ENCODE measurements at regions of chr1 and their contacts with region 1.

Region 1: DNA sequence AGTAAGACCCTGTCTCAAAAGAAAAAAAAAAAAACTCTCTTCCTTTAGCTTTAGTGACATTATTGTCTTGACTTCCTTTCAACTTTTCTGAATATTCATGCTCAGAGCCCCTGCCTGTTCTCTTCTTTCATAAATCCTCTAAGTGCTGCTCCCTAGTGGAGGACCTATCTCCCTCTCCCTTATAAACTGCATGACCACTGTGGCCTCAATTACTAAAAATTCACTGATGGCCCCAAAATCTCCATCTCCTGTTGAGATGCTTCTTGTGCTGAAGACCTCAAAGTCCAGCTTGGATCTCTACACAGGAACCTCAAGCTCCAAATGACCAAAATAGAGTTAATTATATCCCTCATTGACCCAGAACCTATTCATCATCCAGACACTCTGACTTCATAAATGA is 7.8 kb downstream of the ITLN1 start:
- DNase-seq: peak in 2 of 5 donors; percentile 42 to 54
- H3K4me3 ChIP-seq: no peak overlapping the region
- H3K4me3 Mint-ChIP-seq: no peak overlapping the region
- H3K27ac ChIP-seq: no peak overlapping the region
- H3K27ac Mint-ChIP-seq: peak overlapping the region in 5 of 8 donors; percentile 2 to 80 (median 27)
- H3K4me1 ChIP-seq: peaks cover 12% of the 10 kb centered on the region
- H3K4me1 Mint-ChIP-seq: peaks cover 23 to 46% (median 23%) of the 10 kb centered on the region in 3 donors
- H3K27me3 ChIP-seq: no peaks in the 10 kb centered on the region
- H3K27me3 Mint-ChIP-seq: no peaks in the 10 kb centered on the region

Region 2: DNA sequence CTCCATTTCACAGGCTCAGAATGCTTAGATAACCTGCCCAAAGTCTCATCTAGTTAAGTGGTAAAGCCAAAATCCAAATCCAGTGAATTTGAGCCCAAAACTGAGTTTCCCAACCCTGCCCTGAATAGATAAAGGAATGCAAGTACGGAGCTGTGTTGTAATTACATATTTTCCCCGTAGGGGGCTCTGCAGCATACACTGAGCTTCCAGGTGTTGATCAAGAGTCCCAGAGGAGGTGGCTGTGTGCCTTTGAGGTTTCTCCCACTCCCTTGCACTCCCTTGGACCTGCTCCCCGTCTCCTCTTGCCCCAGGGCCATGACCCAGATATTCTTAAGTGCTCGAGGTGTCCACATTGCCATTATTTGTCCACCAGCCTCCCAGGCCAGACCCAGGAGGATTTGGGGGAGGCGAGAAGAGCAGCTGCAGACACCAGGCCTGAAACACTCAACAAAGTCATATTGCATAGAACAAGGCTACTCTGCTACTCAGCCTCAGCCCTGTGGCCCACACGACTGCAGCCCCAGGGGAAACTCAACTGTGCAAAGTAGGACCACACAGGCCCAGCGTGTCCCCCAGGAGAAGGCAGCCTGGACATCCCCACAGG is 99.6 kb before region 1 on chr1:
- CTCF ChIA-PET with region 1: interaction called, 11 read pairs
- POLR2A ChIA-PET with region 1: no interaction called
- DNase-seq: peak in 4 of 5 donors; percentile 31 to 64 (median 62)
- H3K4me3 ChIP-seq: no peak overlapping the region
- H3K4me3 Mint-ChIP-seq: peak overlapping the region in 1 of 7 donors; percentile 21
- H3K27ac ChIP-seq: no peak overlapping the region
- H3K27ac Mint-ChIP-seq: peak overlapping the region in 3 of 8 donors; percentile 45 to 90 (median 70)
- H3K4me1 ChIP-seq: peaks cover 7% of the 10 kb centered on the region
- H3K4me1 Mint-ChIP-seq: peaks cover 16 to 27% (median 26%) of the 10 kb centered on the region in 3 donors
- H3K27me3 ChIP-seq: no peaks in the 10 kb centered on the region
- H3K27me3 Mint-ChIP-seq: no peaks in the 10 kb centered on the region

Region 3: DNA sequence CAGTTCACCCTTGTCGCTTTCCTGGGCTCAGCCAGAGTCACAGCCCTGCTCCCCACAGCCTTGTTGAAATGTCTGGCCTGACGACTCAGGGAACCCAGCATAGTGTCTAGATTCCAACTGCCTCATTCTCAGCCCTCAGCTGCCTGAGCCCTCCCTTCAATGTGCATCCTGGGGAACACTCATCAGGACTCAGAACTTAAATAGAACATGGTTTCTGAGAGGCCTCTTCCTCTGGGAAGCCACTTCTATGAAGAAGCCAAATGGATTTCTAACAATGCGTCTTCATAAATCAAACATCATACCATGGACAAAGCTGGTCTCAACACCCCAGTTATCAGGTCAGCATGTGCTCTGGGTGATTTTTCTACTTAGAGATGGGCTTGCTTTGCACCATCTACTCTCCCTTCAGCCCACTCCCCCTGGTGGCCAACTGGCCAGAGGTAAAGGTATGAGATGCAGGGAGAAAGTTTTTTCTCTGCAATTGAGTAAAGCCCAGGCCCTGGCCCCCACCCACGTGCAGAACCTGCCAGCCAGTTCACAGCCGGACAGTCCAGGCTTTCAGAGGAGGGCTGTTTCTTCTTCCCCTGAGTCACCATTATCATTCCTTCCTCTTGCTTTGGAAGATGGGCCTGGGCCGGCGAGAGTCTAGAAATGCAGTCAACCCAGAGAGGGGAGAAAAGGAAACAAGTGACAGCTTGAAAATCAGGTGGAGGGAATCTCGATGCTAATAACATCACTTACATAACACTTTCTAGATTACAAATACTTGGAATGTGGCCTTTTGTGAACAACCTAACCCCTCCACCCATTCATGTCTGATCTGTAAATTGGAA is 46.7 kb before region 1 on chr1:
- CTCF ChIA-PET with region 1: interaction called, 37 read pairs
- POLR2A ChIA-PET with region 1: no interaction called
- DNase-seq: peak; percentile 50 to 84 (median 64)
- H3K4me3 ChIP-seq: no peak overlapping the region
- H3K4me3 Mint-ChIP-seq: no peak overlapping the region
- H3K27ac ChIP-seq: no peak overlapping the region
- H3K27ac Mint-ChIP-seq: peak overlapping the region; percentile 18 to 95 (median 78)
- H3K4me1 ChIP-seq: peaks cover 25% of the 10 kb centered on the region
- H3K4me1 Mint-ChIP-seq: peaks cover 32 to 50% (median 49%) of the 10 kb centered on the region in 3 donors
- H3K27me3 ChIP-seq: no peaks in the 10 kb centered on the region
- H3K27me3 Mint-ChIP-seq: no peaks in the 10 kb centered on the region

Region 4: DNA sequence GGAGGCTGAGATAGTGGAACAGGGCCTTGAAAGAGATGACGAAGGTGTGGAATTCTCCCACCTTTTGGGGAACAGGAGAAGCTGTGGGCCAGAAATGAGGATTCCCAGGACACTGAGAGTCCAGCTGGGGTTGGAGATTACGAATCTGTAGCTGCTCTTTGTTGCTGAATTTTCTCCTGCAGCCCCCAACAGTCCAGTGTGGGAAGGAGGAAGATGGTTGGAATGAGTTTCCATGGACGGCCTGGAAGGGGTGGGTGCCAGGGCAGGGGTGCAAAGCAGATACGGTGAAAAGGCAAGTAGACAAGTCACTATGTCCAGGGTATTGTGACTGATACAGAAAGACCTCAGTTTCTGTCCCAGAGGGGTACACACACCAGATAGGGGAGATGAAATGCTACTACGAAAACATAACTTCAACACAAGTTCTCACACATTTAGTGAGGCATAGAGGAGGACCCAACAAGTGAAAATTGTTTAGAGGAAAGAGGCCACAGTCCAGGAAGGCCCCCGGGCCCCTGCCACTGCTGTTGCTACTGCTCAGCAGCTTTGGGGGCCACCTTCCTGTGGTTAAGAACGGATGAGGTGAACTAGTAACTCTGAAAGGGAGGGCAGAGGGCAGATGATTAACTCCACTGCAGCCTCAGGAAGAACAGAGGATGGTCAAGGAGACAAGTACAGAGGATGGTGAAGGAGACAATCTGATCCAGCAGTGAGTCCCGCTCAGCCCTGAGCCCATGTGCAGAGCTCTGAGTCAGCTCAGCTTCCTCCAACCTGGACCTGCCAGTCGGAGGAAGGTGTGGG is 21.8 kb before region 1 on chr1:
- CTCF ChIA-PET with region 1: interaction called, 10 read pairs
- POLR2A ChIA-PET with region 1: no interaction called
- DNase-seq: peak in 2 of 5 donors; percentile 33 to 67
- H3K4me3 ChIP-seq: peak overlapping the region; percentile 8
- H3K4me3 Mint-ChIP-seq: no peak overlapping the region
- H3K27ac ChIP-seq: no peak overlapping the region
- H3K27ac Mint-ChIP-seq: no peak overlapping the region
- H3K4me1 ChIP-seq: peaks cover 34% of the 10 kb centered on the region
- H3K4me1 Mint-ChIP-seq: peaks cover 29 to 35% (median 32%) of the 10 kb centered on the region in 3 donors
- H3K27me3 ChIP-seq: no peaks in the 10 kb centered on the region
- H3K27me3 Mint-ChIP-seq: no peaks in the 10 kb centered on the region

Region 5: DNA sequence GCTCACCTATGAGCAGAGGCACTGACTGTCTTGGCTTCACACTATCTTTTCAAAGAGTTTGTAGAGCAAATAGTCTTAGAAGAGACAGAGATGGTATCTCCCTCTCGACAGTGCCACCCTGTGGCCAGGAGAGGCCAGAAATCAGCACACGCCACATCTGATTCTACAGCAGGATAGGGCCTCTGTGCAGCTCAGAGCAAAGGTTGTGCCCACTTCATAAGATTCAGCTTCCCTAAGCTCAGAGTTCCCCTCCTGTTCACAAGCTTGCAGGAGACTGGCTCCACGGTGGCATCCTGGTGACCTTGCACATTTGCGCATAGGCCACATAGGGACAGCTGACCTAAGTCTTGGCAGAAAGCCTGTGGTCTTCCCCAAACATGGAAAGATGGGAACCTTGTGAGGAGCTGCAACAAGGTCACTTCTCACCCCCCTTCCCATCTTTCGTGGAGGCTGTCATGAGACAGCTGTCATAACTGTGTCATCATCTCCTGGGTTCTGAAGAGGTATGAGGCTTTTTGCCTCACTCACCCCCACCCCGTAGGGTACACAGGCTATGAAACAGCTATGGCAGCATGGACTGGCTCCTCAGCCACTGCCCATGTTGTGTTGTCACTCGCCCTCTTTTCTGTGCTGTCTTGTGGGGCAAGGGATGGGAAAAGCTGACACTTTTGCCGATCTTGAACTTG is 74.4 kb after region 1 on chr1:
- CTCF ChIA-PET with region 1: interaction called, 17 read pairs
- POLR2A ChIA-PET with region 1: no interaction called
- DNase-seq: peak; percentile 49 to 74 (median 55)
- H3K4me3 ChIP-seq: no peak overlapping the region
- H3K4me3 Mint-ChIP-seq: no peak overlapping the region
- H3K27ac ChIP-seq: no peak overlapping the region
- H3K27ac Mint-ChIP-seq: peak overlapping the region in 3 of 8 donors; percentile 12 to 36 (median 33)
- H3K4me1 ChIP-seq: peaks cover 3% of the 10 kb centered on the region
- H3K4me1 Mint-ChIP-seq: peaks cover 12 to 26% (median 23%) of the 10 kb centered on the region in 3 donors
- H3K27me3 ChIP-seq: no peaks in the 10 kb centered on the region
- H3K27me3 Mint-ChIP-seq: no peaks in the 10 kb centered on the region